ENCODE measurements at regions of chr16 and their contacts with region 1.

Region 1: GRCh38 chr16:50747207-50747956 is 5.5 kb downstream of the CYLD start:
- DNase-seq: peak in 5 of 14 experiments; percentile 14 to 86 (median 78)
- ATAC-seq: peak; percentile 72
- H3K4me3 ChIP-seq: peak overlapping the region; percentile 80
- H3K4me3 Mint-ChIP-seq: peak overlapping the region; percentile 86
- H3K27ac ChIP-seq: peak overlapping the region; percentile 38 to 66
- H3K27ac Mint-ChIP-seq: peak overlapping the region; percentile 87
- H3K4me1 ChIP-seq: peaks cover 23% of the 10 kb centered on the region
- H3K4me1 Mint-ChIP-seq: peaks cover 80% of the 10 kb centered on the region
- H3K27me3 ChIP-seq: no peaks in the 10 kb centered on the region
- H3K27me3 Mint-ChIP-seq: no peaks in the 10 kb centered on the region
- CTCF ChIP-seq: peak; percentile 72

Region 2: DNA sequence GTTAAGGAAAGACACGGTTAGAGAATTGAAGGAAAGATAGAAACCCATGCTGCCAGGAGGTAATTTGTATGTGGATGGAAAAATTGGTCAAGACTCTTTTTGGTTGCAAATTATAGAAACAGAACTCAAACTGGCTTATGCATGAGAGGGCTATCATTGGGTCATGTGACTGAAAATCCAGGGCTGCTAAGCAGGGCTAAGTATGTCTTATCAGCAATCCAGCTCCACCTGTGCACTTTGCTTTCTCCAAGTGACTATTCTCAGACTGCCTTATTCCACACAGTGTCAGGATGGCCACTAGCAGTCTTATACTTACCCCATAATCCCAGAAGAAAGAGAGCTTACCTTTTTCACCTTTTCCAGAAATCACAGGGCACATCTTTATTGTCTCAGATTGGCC is 1579.3 kb before region 1 on chr16:
- CTCF ChIA-PET with region 1: no interaction called
- POLR2A ChIA-PET with region 1: no interaction called
- intact Hi-C with region 1: no loop called
- DNase-seq: no peak
- ATAC-seq: no peak
- H3K4me3 ChIP-seq: no peak overlapping the region
- H3K4me3 Mint-ChIP-seq: no peak overlapping the region
- H3K27ac ChIP-seq: no peak overlapping the region
- H3K27ac Mint-ChIP-seq: no peak overlapping the region
- H3K4me1 ChIP-seq: no peaks in the 10 kb centered on the region
- H3K4me1 Mint-ChIP-seq: no peaks in the 10 kb centered on the region
- H3K27me3 ChIP-seq: no peaks in the 10 kb centered on the region
- H3K27me3 Mint-ChIP-seq: peaks cover 4% of the 10 kb centered on the region
- CTCF ChIP-seq: no peak

Region 3: DNA sequence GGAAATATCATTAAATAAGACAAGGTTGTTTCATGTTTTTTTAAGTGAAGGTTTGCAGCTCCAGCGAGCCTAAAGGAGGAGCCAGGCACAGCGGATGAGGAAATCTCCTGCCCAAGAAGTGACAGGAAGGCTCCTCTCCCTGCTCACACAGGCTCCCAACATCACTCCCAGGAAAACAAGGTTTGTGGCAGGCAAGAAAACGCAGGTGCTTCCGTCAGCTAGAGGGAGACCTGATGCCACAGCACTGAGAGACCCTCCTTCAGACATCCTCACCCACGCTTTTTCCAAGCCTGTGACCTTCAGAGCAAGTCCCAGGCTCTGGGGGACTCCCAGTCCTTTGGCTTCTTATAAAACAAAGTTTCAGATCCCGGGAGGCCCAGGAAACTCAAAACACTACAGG is 981.2 kb before region 1 on chr16:
- CTCF ChIA-PET with region 1: no interaction called
- POLR2A ChIA-PET with region 1: no interaction called
- intact Hi-C with region 1: no loop called
- DNase-seq: no peak
- ATAC-seq: no peak
- H3K4me3 ChIP-seq: no peak overlapping the region
- H3K4me3 Mint-ChIP-seq: no peak overlapping the region
- H3K27ac ChIP-seq: no peak overlapping the region
- H3K27ac Mint-ChIP-seq: no peak overlapping the region
- H3K4me1 ChIP-seq: no peaks in the 10 kb centered on the region
- H3K4me1 Mint-ChIP-seq: no peaks in the 10 kb centered on the region
- H3K27me3 ChIP-seq: no peaks in the 10 kb centered on the region
- H3K27me3 Mint-ChIP-seq: peaks cover 5% of the 10 kb centered on the region
- CTCF ChIP-seq: no peak

Region 4: GRCh38 chr16:50266337-50267091 is 480.9 kb before region 1 on chr16 and contains the start of gene ADCY7:
- CTCF ChIA-PET with region 1: no interaction called
- POLR2A ChIA-PET with region 1: interaction called, 4 read pairs
- intact Hi-C with region 1: loop called (anchors 2 to 5 kb)
- DNase-seq: peak; percentile 66 to 90 (median 86)
- ATAC-seq: peak; percentile 91
- H3K4me3 ChIP-seq: peak within 1 kb of the TSS; percentile 98
- H3K4me3 Mint-ChIP-seq: peak within 1 kb of the TSS; percentile 99
- H3K27ac ChIP-seq: peak within 1 kb of the TSS; percentile 87 to 97
- H3K27ac Mint-ChIP-seq: peak within 1 kb of the TSS; percentile 100
- H3K4me1 ChIP-seq: peaks cover 65% of the 10 kb centered on the region
- H3K4me1 Mint-ChIP-seq: peaks cover 73% of the 10 kb centered on the region
- H3K27me3 ChIP-seq: no peaks in the 10 kb centered on the region
- H3K27me3 Mint-ChIP-seq: no peaks in the 10 kb centered on the region
- CTCF ChIP-seq: no peak
- total RNA-seq, gene ADCY7: 136 to 147 TPM

Region 5: GRCh38 chr16:50335196-50335958 is 412.0 kb before region 1 on chr16:
- CTCF ChIA-PET with region 1: no interaction called
- POLR2A ChIA-PET with region 1: interaction called, 4 read pairs
- intact Hi-C with region 1: loop called in 1 of 2 experiments (anchors 5 kb)
- DNase-seq: peak in 10 of 14 experiments; percentile 37 to 90 (median 50)
- ATAC-seq: peak; percentile 73
- H3K4me3 ChIP-seq: no peak overlapping the region
- H3K4me3 Mint-ChIP-seq: peak overlapping the region; percentile 80
- H3K27ac ChIP-seq: peak overlapping the region in 1 of 2 donors; percentile 25
- H3K27ac Mint-ChIP-seq: peak overlapping the region; percentile 98
- H3K4me1 ChIP-seq: peaks cover 41% of the 10 kb centered on the region
- H3K4me1 Mint-ChIP-seq: peaks cover 68% of the 10 kb centered on the region
- H3K27me3 ChIP-seq: no peaks in the 10 kb centered on the region
- H3K27me3 Mint-ChIP-seq: no peaks in the 10 kb centered on the region
- CTCF ChIP-seq: no peak

Region 6: GRCh38 chr16:50671644-50672260 is 75.6 kb before region 1 on chr16:
- CTCF ChIA-PET with region 1: interaction called, 15 read pairs
- POLR2A ChIA-PET with region 1: interaction called, 167 read pairs
- intact Hi-C with region 1: loop called in 1 of 2 experiments (anchors 2 kb)
- DNase-seq: peak in 11 of 14 experiments; percentile 26 to 76 (median 47)
- ATAC-seq: peak; percentile 25
- H3K4me3 ChIP-seq: no peak overlapping the region
- H3K4me3 Mint-ChIP-seq: peak overlapping the region; percentile 39
- H3K27ac ChIP-seq: no peak overlapping the region
- H3K27ac Mint-ChIP-seq: peak overlapping the region; percentile 74
- H3K4me1 ChIP-seq: peaks cover 31% of the 10 kb centered on the region
- H3K4me1 Mint-ChIP-seq: peaks cover 42% of the 10 kb centered on the region
- H3K27me3 ChIP-seq: no peaks in the 10 kb centered on the region
- H3K27me3 Mint-ChIP-seq: no peaks in the 10 kb centered on the region
- CTCF ChIP-seq: peak; percentile 63

Region 7: GRCh38 chr16:50761267-50761666 is 13.9 kb after region 1 on chr16:
- CTCF ChIA-PET with region 1: interaction called, 4 read pairs
- POLR2A ChIA-PET with region 1: interaction called, 5 read pairs
- intact Hi-C with region 1: loop called in 1 of 2 experiments (anchors 2 kb)
- DNase-seq: no peak
- ATAC-seq: no peak
- H3K4me3 ChIP-seq: no peak overlapping the region
- H3K4me3 Mint-ChIP-seq: peak overlapping the region; percentile 1
- H3K27ac ChIP-seq: no peak overlapping the region
- H3K27ac Mint-ChIP-seq: peak overlapping the region; percentile 10
- H3K4me1 ChIP-seq: peaks cover 30% of the 10 kb centered on the region
- H3K4me1 Mint-ChIP-seq: peaks cover 95% of the 10 kb centered on the region
- H3K27me3 ChIP-seq: no peaks in the 10 kb centered on the region
- H3K27me3 Mint-ChIP-seq: no peaks in the 10 kb centered on the region
- CTCF ChIP-seq: no peak

Region 8: GRCh38 chr16:50791522-50791921 is 44.1 kb after region 1 on chr16:
- CTCF ChIA-PET with region 1: interaction called, 3 read pairs
- POLR2A ChIA-PET with region 1: no interaction called
- intact Hi-C with region 1: loop called in 1 of 2 experiments (anchors 5 kb)
- DNase-seq: no peak
- ATAC-seq: no peak
- H3K4me3 ChIP-seq: no peak overlapping the region
- H3K4me3 Mint-ChIP-seq: no peak overlapping the region
- H3K27ac ChIP-seq: no peak overlapping the region
- H3K27ac Mint-ChIP-seq: peak overlapping the region; percentile 17
- H3K4me1 ChIP-seq: no peaks in the 10 kb centered on the region
- H3K4me1 Mint-ChIP-seq: peaks cover 24% of the 10 kb centered on the region
- H3K27me3 ChIP-seq: no peaks in the 10 kb centered on the region
- H3K27me3 Mint-ChIP-seq: no peaks in the 10 kb centered on the region
- CTCF ChIP-seq: no peak

Region 9: GRCh38 chr16:50812876-50813466 is 65.6 kb after region 1 on chr16:
- CTCF ChIA-PET with region 1: no interaction called
- POLR2A ChIA-PET with region 1: no interaction called
- intact Hi-C with region 1: no loop called
- DNase-seq: no peak
- ATAC-seq: no peak
- H3K4me3 ChIP-seq: no peak overlapping the region
- H3K4me3 Mint-ChIP-seq: no peak overlapping the region
- H3K27ac ChIP-seq: no peak overlapping the region
- H3K27ac Mint-ChIP-seq: no peak overlapping the region
- H3K4me1 ChIP-seq: no peaks in the 10 kb centered on the region
- H3K4me1 Mint-ChIP-seq: no peaks in the 10 kb centered on the region
- H3K27me3 ChIP-seq: no peaks in the 10 kb centered on the region
- H3K27me3 Mint-ChIP-seq: no peaks in the 10 kb centered on the region
- CTCF ChIP-seq: no peak

Measured in CD4-positive, alpha-beta T cell (primary cell).